OCI-LY7 (cell line): ENCODE measurements at regions of chr20 and their contacts with region 1.

Region 1: GRCh38 chr20:34834459-34834893 is 9.0 kb upstream of the NCOA6 start:
- DNase-seq: peak; percentile 67
- H3K4me3 ChIP-seq: peak overlapping the region; percentile 10
- H3K27ac ChIP-seq: no peak overlapping the region
- H3K4me1 ChIP-seq: no peaks in the 10 kb centered on the region
- CTCF ChIP-seq: peak; percentile 78

Region 2: DNA sequence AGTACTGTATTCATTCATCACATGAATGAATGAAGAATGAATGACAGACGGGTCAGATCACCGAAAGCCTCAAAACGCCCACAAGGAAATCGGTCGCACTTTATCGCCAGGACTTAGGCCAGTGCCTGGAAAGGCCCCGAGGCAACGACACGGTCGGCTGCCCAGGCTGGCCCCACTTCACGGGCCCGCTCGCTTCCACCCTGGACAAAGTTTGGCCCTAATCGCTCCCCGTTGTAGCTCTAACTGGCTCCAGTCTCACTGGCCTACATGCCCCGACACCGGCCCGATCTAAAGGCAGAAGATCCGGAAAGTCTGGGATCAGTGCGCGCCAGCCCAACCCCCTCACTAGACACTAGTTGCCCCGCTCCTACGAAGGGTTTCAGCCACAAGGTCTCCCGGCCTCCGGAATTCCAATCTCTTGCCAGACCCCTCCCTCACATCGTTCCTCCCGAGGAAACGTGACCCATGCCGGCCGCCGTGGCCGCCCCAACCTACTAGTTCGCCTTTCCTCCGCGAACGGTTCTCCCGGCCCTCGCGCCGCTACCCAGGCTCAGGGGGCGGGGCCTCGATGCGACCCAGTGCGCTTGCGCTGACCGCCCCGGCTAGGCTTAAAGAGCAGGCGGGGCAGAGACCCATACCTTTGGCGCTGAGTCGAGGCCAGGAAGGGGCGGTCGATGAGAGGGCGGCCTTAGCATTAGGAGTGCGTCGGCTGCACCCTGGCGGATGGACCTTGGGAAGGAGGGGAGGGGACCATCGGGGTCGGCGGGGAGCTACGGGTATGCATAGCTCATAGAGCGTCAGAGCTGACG is 121.0 kb after region 1 on chr20 and contains the starts of genes GSS and MYH7B:
- CTCF ChIA-PET with region 1: interaction called, 3 read pairs
- POLR2A ChIA-PET with region 1: no interaction called
- intact Hi-C with region 1: loop called (anchors 1 kb)
- DNase-seq: peak; percentile 97
- H3K4me3 ChIP-seq: peak within 1 kb of the TSS; percentile 78
- H3K27ac ChIP-seq: peak within 1 kb of the TSS; percentile 61
- H3K4me1 ChIP-seq: peaks cover 79% of the 10 kb centered on the region
- CTCF ChIP-seq: peak; percentile 73
- total RNA-seq, gene GSS: 91.4 and 105 TPM in 2 replicates
- total RNA-seq, gene MYH7B: 0.08 and 0.79 TPM in 2 replicates

Region 3: DNA sequence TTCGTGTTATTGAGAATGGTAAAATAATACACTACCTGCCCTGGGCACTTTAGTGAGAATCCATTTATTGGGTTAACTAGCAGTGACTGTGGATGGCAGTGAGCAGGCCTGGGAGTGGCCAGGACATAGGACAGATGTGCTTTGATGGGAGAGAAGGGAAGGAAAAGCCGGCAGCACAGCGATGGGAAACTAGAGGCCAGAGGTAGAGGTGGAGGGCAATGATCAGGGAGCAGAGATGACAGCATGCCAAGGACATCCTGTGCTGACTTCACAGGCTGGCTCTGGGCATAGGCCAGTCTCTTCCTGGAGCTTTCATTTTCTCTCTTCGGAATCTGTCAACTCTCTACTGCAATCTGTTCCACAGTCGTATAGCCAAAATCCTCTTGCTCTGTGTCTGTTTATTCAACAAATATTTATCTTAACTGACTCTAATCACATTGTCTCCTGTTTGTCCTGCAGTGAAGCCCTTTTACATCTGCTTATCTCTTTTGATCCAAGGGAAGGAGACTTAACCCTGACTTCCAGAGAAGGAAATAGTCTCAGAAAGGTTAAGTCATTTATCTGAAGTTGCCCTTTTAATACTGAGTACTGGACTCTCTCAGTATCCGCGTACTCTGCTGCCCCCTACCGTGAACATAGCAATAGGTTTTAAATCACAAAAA is 373.6 kb after region 1 on chr20:
- CTCF ChIA-PET with region 1: no interaction called
- POLR2A ChIA-PET with region 1: no interaction called
- intact Hi-C with region 1: loop called (anchors 5 kb)
- DNase-seq: peak; percentile 76
- H3K4me3 ChIP-seq: no peak overlapping the region
- H3K27ac ChIP-seq: no peak overlapping the region
- H3K4me1 ChIP-seq: no peaks in the 10 kb centered on the region
- CTCF ChIP-seq: peak; percentile 89

Region 4: DNA sequence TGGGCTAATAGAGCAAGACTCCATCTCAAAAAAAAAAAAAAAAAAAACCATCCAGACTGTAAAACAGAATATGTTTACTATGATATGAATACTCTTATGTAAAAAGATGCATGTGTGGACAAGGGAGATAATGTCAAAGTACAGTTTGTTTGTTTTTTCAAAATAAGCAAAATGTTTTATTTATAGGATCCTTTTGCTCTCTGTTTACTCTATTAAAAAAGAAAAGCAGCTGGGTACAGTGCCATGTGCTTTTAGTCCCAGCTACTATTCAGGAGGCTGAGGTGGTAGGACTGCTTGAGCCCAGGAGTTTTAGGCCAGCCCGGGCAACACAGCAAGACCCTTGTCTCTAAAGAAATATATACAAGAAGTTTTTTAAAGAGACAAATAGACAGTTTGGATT is 539.2 kb after region 1 on chr20:
- CTCF ChIA-PET with region 1: no interaction called
- POLR2A ChIA-PET with region 1: no interaction called
- intact Hi-C with region 1: no loop called
- DNase-seq: no peak
- H3K4me3 ChIP-seq: no peak overlapping the region
- H3K27ac ChIP-seq: no peak overlapping the region
- H3K4me1 ChIP-seq: no peaks in the 10 kb centered on the region
- CTCF ChIP-seq: no peak